PC-3 (cell line): ENCODE measurements at regions of chr17 and their contacts with region 1.

Region 1: DNA sequence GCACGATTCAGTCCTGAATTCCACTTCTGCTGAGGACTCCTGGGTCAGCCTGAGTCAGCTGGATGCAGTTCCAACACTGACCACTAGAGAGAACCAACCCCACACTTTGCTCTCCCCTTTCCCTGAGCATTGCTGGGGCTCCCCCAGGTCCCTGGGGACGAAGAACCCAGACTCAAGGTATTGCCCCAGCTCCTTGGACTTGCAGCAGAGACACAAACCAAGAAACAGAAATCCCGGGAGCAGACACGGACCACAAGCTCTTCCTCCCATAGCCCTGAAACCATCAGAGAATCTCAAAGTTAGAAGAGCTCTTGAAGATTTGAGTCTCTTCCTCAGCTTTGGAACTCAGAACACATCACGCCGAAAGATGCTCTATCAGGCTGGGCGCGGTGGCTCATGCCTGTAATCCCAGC is 678 bp upstream of the GH1 start:
- DNase-seq: peak; percentile 76
- ATAC-seq: peak; percentile 95
- H3K4me3 ChIP-seq: no peak overlapping the region
- H3K27ac ChIP-seq: no peak overlapping the region
- H3K4me1 ChIP-seq: no peaks in the 10 kb centered on the region
- H3K27me3 ChIP-seq: peaks cover 14% of the 10 kb centered on the region; the same call in 1 of the 2 replicates
- CTCF ChIP-seq: peak; percentile 91

Region 2: DNA sequence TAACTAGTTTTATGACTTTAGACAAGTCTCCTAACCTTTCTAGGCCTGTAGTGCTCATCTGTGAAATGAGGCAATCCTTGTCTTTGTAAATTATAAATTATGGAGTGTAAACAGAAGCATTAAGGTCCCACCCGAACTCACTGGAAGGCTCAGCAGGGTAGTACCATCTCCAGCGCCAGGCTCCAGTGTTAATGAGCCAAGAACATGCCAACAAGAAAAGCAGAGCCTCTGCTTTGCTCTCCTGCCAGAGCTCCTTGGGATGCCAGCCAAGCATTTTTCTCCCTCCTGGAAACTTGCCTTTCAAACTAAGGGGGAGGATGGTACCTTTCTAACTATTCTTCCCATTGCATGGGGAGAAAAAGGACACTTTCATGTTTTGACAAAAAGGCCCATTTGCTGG is 234.3 kb before region 1 on chr17:
- CTCF ChIA-PET with region 1: no interaction called
- POLR2A ChIA-PET with region 1: no interaction called
- intact Hi-C with region 1: no loop called
- DNase-seq: no peak
- ATAC-seq: no peak
- H3K4me3 ChIP-seq: no peak overlapping the region
- H3K27ac ChIP-seq: no peak overlapping the region
- H3K4me1 ChIP-seq: no peaks in the 10 kb centered on the region
- H3K27me3 ChIP-seq: no peaks in the 10 kb centered on the region
- CTCF ChIP-seq: no peak

Region 3: DNA sequence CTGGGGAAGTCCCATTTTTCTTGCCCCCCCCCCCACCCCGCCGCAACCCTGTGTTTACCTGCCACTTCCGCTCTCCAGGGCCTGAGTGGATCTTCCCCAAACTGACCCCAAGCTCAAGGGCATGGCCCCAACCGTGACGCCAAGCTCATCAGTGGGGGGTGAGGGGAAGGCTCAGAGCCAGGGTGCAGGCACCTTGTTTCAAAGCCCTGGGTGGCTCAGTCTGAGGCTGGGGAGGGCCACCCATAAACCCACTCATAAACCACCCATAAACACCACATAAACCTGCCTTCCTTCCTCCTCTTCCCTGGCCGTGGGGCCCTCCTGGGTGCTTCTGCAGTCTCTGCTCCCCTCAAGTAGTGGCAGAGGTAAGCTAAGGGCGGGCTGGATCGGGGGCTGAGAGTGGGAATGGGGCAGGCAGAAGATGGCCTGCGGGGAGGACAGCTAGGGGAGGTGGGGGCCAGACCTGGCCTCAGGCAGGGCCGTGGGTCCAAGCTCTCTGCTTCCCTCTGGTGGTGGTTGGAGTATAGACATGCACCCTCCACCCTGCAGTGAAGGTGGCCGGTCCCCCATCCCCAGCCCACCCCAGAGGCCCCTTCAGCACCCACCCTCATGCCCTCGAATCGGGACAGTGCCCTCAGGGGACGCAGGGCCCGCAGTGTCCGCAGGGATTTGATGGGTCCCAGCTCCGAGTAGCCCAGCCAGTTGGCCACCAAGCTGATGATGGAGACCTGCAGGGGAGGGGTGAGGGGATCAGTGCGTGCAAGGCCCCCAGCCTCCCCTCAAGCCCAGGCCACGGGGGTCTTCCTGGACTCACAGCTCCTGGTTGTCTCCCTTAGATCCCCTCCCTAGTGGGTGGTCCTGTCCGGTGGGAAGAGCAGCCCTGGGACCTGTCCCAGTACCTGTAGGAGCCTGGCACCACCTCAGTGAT is 27.4 kb after region 1 on chr17:
- CTCF ChIA-PET with region 1: interaction called, 22 read pairs
- POLR2A ChIA-PET with region 1: no interaction called
- intact Hi-C with region 1: loop called (anchors 5 kb)
- DNase-seq: peak; percentile 60
- ATAC-seq: peak; percentile 69
- H3K4me3 ChIP-seq: no peak overlapping the region
- H3K27ac ChIP-seq: no peak overlapping the region
- H3K4me1 ChIP-seq: no peaks in the 10 kb centered on the region
- H3K27me3 ChIP-seq: no peaks in the 10 kb centered on the region
- CTCF ChIP-seq: peak; percentile 75

Region 4: GRCh38 chr17:63984651-63985386 is 65.5 kb after region 1 on chr17:
- CTCF ChIA-PET with region 1: interaction called, 3 read pairs
- POLR2A ChIA-PET with region 1: no interaction called
- intact Hi-C with region 1: loop called (anchors 2 kb)
- DNase-seq: peak; percentile 87
- ATAC-seq: peak; percentile 92
- H3K4me3 ChIP-seq: no peak overlapping the region
- H3K27ac ChIP-seq: no peak overlapping the region
- H3K4me1 ChIP-seq: peaks cover 12% of the 10 kb centered on the region
- H3K27me3 ChIP-seq: no peaks in the 10 kb centered on the region
- CTCF ChIP-seq: no peak

Region 5: DNA sequence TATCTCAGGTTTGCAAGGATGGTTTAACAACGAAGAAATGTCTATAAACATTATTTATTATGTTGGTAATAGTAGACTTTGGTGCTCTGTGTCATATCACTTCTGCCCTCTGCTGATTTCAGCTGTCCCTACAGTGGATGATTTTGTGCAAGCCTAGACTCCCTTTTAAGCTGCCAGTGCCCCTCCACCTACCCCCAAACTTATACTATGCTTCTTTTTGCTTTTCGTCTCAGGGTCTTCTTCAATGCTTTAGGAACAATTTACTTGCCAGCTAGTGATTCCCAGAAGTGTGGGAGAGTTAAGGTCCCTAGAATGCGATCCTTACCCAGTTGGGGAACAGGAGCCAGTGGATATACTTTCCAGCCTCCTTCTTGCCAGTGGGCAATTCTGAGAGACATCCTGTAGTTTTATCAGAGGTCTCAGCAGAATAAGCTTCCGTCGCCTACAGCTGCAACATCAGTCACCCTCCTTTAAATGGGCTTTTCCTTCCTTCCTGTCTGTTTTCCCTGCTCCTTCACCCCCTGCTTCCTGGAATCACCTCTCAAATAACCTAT is 97.0 kb after region 1 on chr17:
- CTCF ChIA-PET with region 1: interaction called, 3 read pairs
- POLR2A ChIA-PET with region 1: interaction called, 4 read pairs
- intact Hi-C with region 1: loop called (anchors 2 kb)
- DNase-seq: no peak
- ATAC-seq: peak; percentile 78
- H3K4me3 ChIP-seq: no peak overlapping the region
- H3K27ac ChIP-seq: no peak overlapping the region
- H3K4me1 ChIP-seq: no peaks in the 10 kb centered on the region
- H3K27me3 ChIP-seq: no peaks in the 10 kb centered on the region
- CTCF ChIP-seq: peak; percentile 55; the same call in 1 of the 2 replicates

Region 6: GRCh38 chr17:64025732-64026294 is 106.5 kb after region 1 on chr17:
- CTCF ChIA-PET with region 1: interaction called, 24 read pairs
- POLR2A ChIA-PET with region 1: interaction called, 4 read pairs
- intact Hi-C with region 1: loop called (anchors 1 kb)
- DNase-seq: peak; percentile 89
- ATAC-seq: peak; percentile 87
- H3K4me3 ChIP-seq: peak overlapping the region; percentile 70
- H3K27ac ChIP-seq: no peak overlapping the region
- H3K4me1 ChIP-seq: peaks cover 4% of the 10 kb centered on the region; the same call in 1 of the 2 replicates
- H3K27me3 ChIP-seq: no peaks in the 10 kb centered on the region
- CTCF ChIP-seq: peak; percentile 99

Region 7: GRCh38 chr17:64281962-64282727 is 362.8 kb after region 1 on chr17:
- CTCF ChIA-PET with region 1: no interaction called
- POLR2A ChIA-PET with region 1: no interaction called
- intact Hi-C with region 1: loop called (anchors 10 kb)
- DNase-seq: peak; percentile 85
- ATAC-seq: peak; percentile 38
- H3K4me3 ChIP-seq: peak overlapping the region; percentile 2; the same call in 1 of the 2 replicates
- H3K27ac ChIP-seq: no peak overlapping the region
- H3K4me1 ChIP-seq: peaks cover 14% of the 10 kb centered on the region
- H3K27me3 ChIP-seq: no peaks in the 10 kb centered on the region
- CTCF ChIP-seq: peak; percentile 95